ENCODE measurements at regions of chr11 and their contacts with region 1.

Region 1: DNA sequence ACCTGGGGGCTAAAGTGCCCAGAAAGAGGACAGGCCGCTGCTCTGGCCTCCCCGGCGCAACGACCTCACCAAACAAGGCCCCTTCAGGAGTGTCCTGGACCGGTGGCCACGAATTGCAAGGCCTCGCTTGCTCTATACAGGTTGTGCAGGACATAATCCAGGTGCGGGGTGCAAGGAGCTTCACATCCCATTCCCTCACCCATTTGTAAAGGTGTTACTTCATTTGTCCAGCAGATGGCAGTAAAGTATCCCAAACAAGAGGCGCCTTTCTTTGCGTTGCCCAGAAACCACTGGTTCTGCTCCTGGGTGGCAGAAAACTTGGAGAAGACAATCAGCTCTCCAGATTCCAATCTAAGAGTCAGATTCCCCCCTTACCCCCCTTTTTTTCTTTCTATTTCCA is 35.9 kb upstream of the PRDM11 start:
- DNase-seq: peak; percentile 49
- H3K4me3 ChIP-seq: no peak overlapping the region
- H3K27ac ChIP-seq: no peak overlapping the region
- H3K4me1 ChIP-seq: peaks cover 6% of the 10 kb centered on the region
- H3K27me3 ChIP-seq: no peaks in the 10 kb centered on the region
- CTCF ChIP-seq: peak; percentile 44 to 73

Region 2: DNA sequence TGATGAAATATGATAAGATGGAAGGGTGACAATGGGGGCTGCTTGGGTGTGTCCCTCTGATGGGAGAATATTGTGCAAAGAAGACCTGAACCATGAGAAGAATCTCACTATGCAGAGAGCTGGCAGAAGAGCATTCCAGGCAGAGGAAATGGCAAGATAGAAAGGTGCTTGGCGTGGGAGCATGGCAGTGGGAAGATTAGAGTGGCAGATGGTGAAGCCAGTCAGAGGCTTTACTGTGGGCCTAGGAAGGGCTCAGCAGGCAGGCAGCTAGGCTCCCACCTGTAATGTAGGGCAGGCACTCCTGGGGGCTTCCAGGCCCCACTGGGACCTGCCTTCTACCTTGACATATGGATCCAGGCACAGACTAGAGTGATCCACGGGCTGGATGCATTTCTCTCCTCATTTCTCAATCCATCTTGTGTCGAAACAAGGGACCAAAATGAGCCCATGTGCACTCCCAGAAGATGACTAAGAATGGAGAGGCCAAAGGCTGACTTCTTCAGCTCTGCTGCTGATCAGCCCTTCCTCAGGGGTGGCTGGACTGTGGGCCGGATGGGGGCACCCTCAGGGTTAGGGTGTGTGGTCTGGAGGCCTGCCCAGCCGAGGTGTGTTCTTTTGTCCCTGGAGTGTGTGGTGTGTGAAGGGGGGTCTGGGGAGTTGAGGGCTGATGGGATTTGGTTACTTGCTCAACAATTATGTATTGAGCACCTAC is 295.5 kb before region 1 on chr11:
- CTCF ChIA-PET with region 1: no interaction called
- dilution Hi-C with region 1: no loop called
- in situ Hi-C with region 1: no loop called
- intact Hi-C with region 1: no loop called
- DNase-seq: no peak
- H3K4me3 ChIP-seq: no peak overlapping the region
- H3K27ac ChIP-seq: no peak overlapping the region
- H3K4me1 ChIP-seq: no peaks in the 10 kb centered on the region
- H3K27me3 ChIP-seq: no peaks in the 10 kb centered on the region
- CTCF ChIP-seq: no peak

Region 3: GRCh38 chr11:45147017-45147728 is 36.6 kb after region 1 on chr11:
- CTCF ChIA-PET with region 1: no interaction called
- dilution Hi-C with region 1: loop called (anchors 5 kb)
- in situ Hi-C with region 1: no loop called
- intact Hi-C with region 1: no loop called
- DNase-seq: peak; percentile 97
- H3K4me3 ChIP-seq: peak overlapping the region; percentile 40 to 69 (median 63)
- H3K27ac ChIP-seq: peak overlapping the region; percentile 48
- H3K4me1 ChIP-seq: peaks cover 10% of the 10 kb centered on the region
- H3K27me3 ChIP-seq: no peaks in the 10 kb centered on the region
- CTCF ChIP-seq: no peak

Region 4: DNA sequence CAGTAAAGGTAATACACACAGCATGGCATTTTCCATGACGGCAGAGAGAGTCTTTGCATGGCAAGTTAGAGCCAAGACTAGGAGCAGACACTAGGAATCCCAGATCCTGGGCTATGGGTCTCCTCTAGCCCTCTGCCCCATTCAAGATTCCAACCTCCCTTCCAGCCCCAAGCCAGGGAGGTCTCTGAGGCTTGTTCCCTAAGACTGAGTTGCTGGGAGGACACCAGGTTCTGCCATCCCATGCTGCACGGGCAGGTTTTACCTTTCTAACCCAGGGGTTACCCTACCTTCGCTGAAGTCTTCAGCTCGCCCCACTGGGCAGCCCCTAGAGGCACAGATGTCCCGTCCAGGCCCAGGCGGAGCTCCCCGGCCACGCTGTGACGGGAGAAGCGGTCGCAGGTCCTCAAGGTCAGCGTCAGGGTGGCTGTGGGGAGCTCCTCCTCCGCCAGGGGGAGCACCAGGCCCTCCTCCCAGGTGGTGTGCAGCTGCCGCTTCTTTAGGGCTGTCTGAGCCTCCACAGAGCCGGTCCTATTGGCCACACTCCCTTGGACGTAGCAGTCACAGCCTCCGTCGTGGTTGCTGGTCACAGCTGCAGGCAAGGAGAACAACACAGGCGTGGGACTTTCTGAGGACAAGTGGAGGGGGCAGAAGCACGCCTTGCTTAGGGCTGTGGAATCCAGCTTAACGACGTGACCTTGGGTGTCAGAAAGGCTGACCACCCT is 141.7 kb after region 1 on chr11:
- CTCF ChIA-PET with region 1: no interaction called
- dilution Hi-C with region 1: no loop called
- in situ Hi-C with region 1: no loop called
- intact Hi-C with region 1: loop called (anchors 2 kb)
- DNase-seq: no peak
- H3K4me3 ChIP-seq: no peak overlapping the region
- H3K27ac ChIP-seq: no peak overlapping the region
- H3K4me1 ChIP-seq: no peaks in the 10 kb centered on the region
- H3K27me3 ChIP-seq: peaks cover under 1% of the 10 kb centered on the region
- CTCF ChIP-seq: peak; percentile 55 to 73

Region 5: GRCh38 chr11:45301537-45302246 is 191.1 kb after region 1 on chr11:
- CTCF ChIA-PET with region 1: no interaction called
- dilution Hi-C with region 1: no loop called
- in situ Hi-C with region 1: loop called (anchors 10 kb)
- intact Hi-C with region 1: no loop called
- DNase-seq: no peak
- H3K4me3 ChIP-seq: no peak overlapping the region
- H3K27ac ChIP-seq: no peak overlapping the region
- H3K4me1 ChIP-seq: no peaks in the 10 kb centered on the region
- H3K27me3 ChIP-seq: peaks cover 1% of the 10 kb centered on the region
- CTCF ChIP-seq: no peak

Region 6: GRCh38 chr11:45322891-45323600 is 212.5 kb after region 1 on chr11:
- CTCF ChIA-PET with region 1: no interaction called
- dilution Hi-C with region 1: no loop called
- in situ Hi-C with region 1: loop called in 1 of 2 experiments (anchors 10 kb)
- intact Hi-C with region 1: no loop called
- DNase-seq: no peak
- H3K4me3 ChIP-seq: no peak overlapping the region
- H3K27ac ChIP-seq: no peak overlapping the region
- H3K4me1 ChIP-seq: no peaks in the 10 kb centered on the region
- H3K27me3 ChIP-seq: no peaks in the 10 kb centered on the region
- CTCF ChIP-seq: no peak

Region 7: GRCh38 chr11:45332276-45332934 is 221.8 kb after region 1 on chr11:
- CTCF ChIA-PET with region 1: no interaction called
- dilution Hi-C with region 1: loop called (anchors 5 kb)
- in situ Hi-C with region 1: loop called (anchors 5 to 10 kb)
- intact Hi-C with region 1: loop called (anchors 1 kb)
- DNase-seq: no peak
- H3K4me3 ChIP-seq: no peak overlapping the region
- H3K27ac ChIP-seq: no peak overlapping the region
- H3K4me1 ChIP-seq: no peaks in the 10 kb centered on the region
- H3K27me3 ChIP-seq: no peaks in the 10 kb centered on the region
- CTCF ChIP-seq: peak; percentile 38 to 60

Region 8: DNA sequence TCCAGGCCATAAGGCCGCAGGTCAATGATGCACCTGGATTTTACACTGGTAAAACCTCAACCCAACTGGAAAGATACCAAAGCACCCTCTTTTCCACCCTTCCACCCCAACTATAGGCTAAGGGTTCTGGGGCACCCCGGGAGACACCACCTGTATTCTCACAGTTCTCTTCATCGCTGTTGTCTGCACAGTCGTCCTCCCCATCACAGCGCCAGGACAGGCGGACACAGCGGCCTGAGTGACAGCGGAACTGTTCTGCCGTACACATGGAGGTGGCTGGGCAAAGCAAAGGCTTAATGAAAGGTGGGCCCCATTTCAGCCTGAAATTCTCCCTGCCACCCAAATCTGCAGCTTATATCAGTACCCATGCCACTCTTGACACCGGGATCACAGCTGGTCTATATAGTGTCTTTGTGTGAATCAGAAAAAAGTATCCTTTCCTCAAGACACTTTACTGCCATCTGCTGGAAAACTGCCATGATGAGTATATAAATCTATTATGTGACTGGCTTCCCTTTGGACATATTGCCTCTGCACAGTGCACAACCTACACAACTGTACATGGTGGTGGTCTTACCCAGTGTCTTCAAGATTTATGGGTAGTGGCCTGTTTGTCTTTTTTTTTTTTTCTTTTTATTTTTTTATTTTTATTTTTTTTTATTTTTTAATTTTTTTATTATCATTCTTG is 1786.3 kb after region 1 on chr11:
- CTCF ChIA-PET with region 1: no interaction called
- dilution Hi-C with region 1: no loop called
- in situ Hi-C with region 1: no loop called
- intact Hi-C with region 1: no loop called
- DNase-seq: peak; percentile 44
- H3K4me3 ChIP-seq: no peak overlapping the region
- H3K27ac ChIP-seq: no peak overlapping the region
- H3K4me1 ChIP-seq: no peaks in the 10 kb centered on the region
- H3K27me3 ChIP-seq: no peaks in the 10 kb centered on the region
- CTCF ChIP-seq: peak; percentile 37 to 48

Measured in mammary epithelial cell (primary cell).